ENCODE measurements at regions of chr15 and their contacts with region 1.

Region 1: GRCh38 chr15:36784098-36784670 is 204.8 kb downstream of the CDIN1 start:
- DNase-seq: no peak
- H3K4me3 ChIP-seq: no peak overlapping the region
- H3K27ac ChIP-seq: no peak overlapping the region
- H3K4me1 ChIP-seq: no peaks in the 10 kb centered on the region
- H3K27me3 ChIP-seq: no peaks in the 10 kb centered on the region
- CTCF ChIP-seq: no peak
- POLR2A ChIP-seq: no peak

Region 2: GRCh38 chr15:36883713-36884517 is 99.7 kb after region 1 on chr15:
- intact Hi-C with region 1: no loop called
- DNase-seq: peak; percentile 62 to 77
- H3K4me3 ChIP-seq: peak overlapping the region; percentile 25 to 55 (median 41)
- H3K27ac ChIP-seq: no peak overlapping the region
- H3K4me1 ChIP-seq: peaks cover 0 to 8% of the 10 kb centered on the region in 2 donors
- H3K27me3 ChIP-seq: peaks cover 0 to 44% of the 10 kb centered on the region in 2 donors
- CTCF ChIP-seq: peak; percentile 69 to 86 (median 79)
- POLR2A ChIP-seq: no peak

Region 3: DNA sequence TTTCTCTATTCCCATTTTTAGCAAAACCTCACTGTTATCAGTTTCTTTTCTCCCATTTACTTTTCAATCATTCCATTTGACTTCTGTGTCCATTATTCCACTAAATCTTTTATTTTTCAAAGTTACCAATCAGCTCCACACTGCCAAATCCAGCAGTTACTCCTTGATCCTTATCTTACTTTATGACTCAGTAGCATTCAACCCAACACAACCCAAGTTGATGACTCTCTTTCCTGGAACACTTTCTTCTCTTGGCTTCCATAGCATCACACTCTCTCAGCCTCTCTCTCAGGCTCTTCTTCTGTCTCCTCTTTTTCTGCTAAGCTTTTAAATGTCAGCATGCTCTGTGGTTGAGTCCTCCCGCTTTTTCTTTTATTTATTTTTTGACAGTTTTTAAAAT is 1744.1 kb after region 1 on chr15:
- intact Hi-C with region 1: loop called (anchors 10 kb)
- DNase-seq: no peak
- H3K4me3 ChIP-seq: no peak overlapping the region
- H3K27ac ChIP-seq: no peak overlapping the region
- H3K4me1 ChIP-seq: no peaks in the 10 kb centered on the region
- H3K27me3 ChIP-seq: no peaks in the 10 kb centered on the region
- CTCF ChIP-seq: no peak
- POLR2A ChIP-seq: no peak

Measured in breast epithelium (tissue), 4 donors.